Activated CD4-positive, alpha-beta T cell treated with anti-CD3 and anti-CD28 coated beads for 36 hours (primary cell): ENCODE measurements at regions of chr22 and their contacts with region 1.

Region 1: GRCh38 chr22:22207845-22208564 is 36.6 kb upstream of the VPREB1 start:
- DNase-seq: peak; percentile 93
- ATAC-seq: peak; percentile 60
- H3K4me3 Mint-ChIP-seq: no peak overlapping the region
- H3K27ac Mint-ChIP-seq: peak overlapping the region; percentile 66
- H3K4me1 Mint-ChIP-seq: peaks cover 38% of the 10 kb centered on the region
- H3K27me3 Mint-ChIP-seq: no peaks in the 10 kb centered on the region

Region 2: GRCh38 chr22:22195265-22196017 is 12.6 kb before region 1 on chr22:
- CTCF ChIA-PET with region 1: interaction called, 10 read pairs
- POLR2A ChIA-PET with region 1: no interaction called
- intact Hi-C with region 1: no loop called
- DNase-seq: peak; percentile 92
- ATAC-seq: peak; percentile 94
- H3K4me3 Mint-ChIP-seq: no peak overlapping the region
- H3K27ac Mint-ChIP-seq: no peak overlapping the region
- H3K4me1 Mint-ChIP-seq: no peaks in the 10 kb centered on the region
- H3K27me3 Mint-ChIP-seq: peaks cover 13% of the 10 kb centered on the region

Region 3: DNA sequence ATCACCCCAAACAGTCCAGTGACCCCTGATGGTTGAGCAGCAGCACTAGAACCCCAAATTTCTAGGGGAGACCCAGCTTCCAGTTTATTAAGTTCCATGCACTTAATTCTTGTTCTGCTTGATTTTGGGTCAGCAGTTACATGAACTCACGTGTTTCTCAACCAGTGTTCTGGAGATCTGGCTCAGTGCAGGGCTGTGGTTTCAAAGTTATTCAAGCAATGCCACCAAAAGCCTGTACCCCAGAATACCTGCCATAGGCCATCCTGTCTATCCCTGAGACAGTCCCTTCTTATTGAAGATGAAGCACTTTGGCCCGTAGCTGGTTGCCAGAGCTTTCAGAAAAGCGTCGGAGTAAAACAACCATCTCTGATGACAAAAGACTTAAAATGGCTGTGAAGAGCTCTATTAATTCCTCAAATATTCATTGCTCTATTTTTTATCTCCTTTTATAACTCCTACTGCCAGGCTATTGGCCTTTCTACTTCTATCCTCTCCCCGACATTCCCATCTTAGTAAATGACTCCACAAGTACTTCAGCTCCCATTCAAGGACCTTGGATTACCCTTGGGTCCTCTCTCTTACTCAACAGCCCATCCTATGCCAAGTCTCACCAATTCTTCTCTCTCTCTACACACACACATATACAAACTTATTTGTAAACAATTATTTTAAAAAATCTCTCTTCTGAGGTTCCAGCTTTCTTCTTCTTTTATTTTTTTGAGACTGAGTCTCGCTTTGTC is 18.6 kb after region 1 on chr22:
- CTCF ChIA-PET with region 1: interaction called, 313 read pairs
- POLR2A ChIA-PET with region 1: no interaction called
- intact Hi-C with region 1: no loop called
- DNase-seq: no peak
- ATAC-seq: no peak
- H3K4me3 Mint-ChIP-seq: no peak overlapping the region
- H3K27ac Mint-ChIP-seq: no peak overlapping the region
- H3K4me1 Mint-ChIP-seq: no peaks in the 10 kb centered on the region
- H3K27me3 Mint-ChIP-seq: peaks cover 2% of the 10 kb centered on the region

Region 4: DNA sequence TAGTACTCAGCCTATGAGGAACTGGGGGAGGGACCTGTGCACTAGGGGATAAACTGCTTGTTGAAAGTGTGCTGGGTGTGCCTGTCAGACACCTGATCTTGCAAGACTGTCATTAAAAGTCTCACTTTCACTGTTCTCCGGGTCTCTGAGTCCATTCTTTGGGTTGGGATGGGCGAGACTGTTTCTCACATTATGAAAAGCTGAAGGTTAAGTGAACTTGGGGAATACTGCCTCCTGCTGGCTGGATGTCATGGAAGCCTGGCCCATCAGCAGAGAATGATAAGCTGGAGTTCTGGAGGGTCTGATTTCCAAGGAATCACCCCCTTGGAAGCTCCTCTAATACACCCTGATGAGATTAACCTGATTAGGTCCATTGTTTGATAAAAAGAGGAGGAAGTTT is 27.6 kb after region 1 on chr22:
- CTCF ChIA-PET with region 1: interaction called, 313 read pairs
- POLR2A ChIA-PET with region 1: no interaction called
- intact Hi-C with region 1: loop called (anchors 1 kb)
- DNase-seq: peak; percentile 81
- ATAC-seq: peak; percentile 66
- H3K4me3 Mint-ChIP-seq: no peak overlapping the region
- H3K27ac Mint-ChIP-seq: peak overlapping the region; percentile 0
- H3K4me1 Mint-ChIP-seq: peaks cover 3% of the 10 kb centered on the region
- H3K27me3 Mint-ChIP-seq: peaks cover 3% of the 10 kb centered on the region

Region 5: DNA sequence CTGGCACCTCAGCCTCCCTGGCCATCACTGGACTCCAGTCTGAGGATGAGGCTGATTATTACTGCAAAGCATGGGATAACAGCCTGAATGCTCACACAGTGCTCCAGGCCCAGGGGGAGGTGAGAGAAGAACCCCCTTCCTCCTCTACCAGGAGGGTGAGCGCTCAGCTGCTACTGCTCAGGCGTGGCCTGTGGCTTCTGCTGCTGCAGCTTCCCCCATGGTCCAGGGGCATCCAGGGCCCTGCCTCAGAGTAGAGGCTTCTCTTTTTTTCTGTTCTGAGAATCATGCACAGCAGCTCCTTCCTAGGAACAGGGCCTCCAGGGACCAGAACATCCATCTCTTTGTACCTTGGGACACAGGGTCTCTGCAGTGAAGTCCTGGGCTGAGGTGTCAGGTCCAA is 119.7 kb after region 1 on chr22:
- CTCF ChIA-PET with region 1: no interaction called
- POLR2A ChIA-PET with region 1: no interaction called
- intact Hi-C with region 1: loop called in 1 of 2 experiments (anchors 10 kb)
- DNase-seq: no peak
- ATAC-seq: no peak
- H3K4me3 Mint-ChIP-seq: no peak overlapping the region
- H3K27ac Mint-ChIP-seq: no peak overlapping the region
- H3K4me1 Mint-ChIP-seq: peaks cover 1% of the 10 kb centered on the region
- H3K27me3 Mint-ChIP-seq: peaks cover 2% of the 10 kb centered on the region

Region 6: DNA sequence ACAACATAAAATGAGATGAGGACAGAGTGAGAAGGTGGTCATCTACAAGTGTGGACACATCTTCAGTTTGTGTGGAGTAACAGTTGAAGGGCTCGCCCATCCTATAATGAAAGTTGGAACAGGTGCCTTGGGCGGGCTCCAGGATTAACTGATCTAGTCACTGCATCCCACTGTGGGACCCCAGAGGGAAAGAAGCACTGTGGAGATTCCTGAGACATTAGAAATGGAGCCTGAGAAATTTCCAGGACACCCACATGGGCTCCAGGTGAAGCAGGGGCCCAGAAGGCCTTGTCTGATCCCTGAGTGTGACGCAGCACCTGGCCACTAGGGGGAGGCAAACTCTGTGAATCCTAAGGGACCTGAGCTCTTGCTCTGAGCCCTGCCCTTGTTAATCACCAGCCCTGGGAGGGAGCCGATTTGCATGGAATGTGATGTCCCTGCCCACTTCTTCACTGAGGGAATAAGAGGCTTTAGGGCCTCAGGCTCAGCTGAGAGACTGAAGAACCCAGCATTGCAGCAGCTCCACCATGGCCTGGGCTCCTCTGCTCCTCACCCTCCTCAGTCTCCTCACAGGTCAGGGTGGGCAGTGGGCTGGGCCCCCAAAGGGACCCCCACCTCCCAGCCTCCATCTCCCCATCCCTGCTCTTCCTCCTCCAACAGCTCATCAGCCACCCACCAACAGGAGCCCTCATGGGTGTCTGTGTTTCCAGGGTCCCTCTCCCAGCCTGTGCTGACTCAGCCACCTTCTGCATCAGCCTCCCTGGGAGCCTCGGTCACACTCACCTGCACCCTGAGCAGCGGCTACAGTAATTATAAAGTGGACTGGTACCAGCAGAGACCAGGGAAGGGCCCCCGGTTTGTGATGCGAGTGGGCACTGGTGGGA is 134.9 kb after region 1 on chr22:
- CTCF ChIA-PET with region 1: interaction called, 4 read pairs
- POLR2A ChIA-PET with region 1: no interaction called
- intact Hi-C with region 1: loop called in 1 of 2 experiments (anchors 5 kb)
- DNase-seq: peak; percentile 82
- ATAC-seq: peak; percentile 83
- H3K4me3 Mint-ChIP-seq: no peak overlapping the region
- H3K27ac Mint-ChIP-seq: no peak overlapping the region
- H3K4me1 Mint-ChIP-seq: no peaks in the 10 kb centered on the region
- H3K27me3 Mint-ChIP-seq: peaks cover 7% of the 10 kb centered on the region

Region 7: DNA sequence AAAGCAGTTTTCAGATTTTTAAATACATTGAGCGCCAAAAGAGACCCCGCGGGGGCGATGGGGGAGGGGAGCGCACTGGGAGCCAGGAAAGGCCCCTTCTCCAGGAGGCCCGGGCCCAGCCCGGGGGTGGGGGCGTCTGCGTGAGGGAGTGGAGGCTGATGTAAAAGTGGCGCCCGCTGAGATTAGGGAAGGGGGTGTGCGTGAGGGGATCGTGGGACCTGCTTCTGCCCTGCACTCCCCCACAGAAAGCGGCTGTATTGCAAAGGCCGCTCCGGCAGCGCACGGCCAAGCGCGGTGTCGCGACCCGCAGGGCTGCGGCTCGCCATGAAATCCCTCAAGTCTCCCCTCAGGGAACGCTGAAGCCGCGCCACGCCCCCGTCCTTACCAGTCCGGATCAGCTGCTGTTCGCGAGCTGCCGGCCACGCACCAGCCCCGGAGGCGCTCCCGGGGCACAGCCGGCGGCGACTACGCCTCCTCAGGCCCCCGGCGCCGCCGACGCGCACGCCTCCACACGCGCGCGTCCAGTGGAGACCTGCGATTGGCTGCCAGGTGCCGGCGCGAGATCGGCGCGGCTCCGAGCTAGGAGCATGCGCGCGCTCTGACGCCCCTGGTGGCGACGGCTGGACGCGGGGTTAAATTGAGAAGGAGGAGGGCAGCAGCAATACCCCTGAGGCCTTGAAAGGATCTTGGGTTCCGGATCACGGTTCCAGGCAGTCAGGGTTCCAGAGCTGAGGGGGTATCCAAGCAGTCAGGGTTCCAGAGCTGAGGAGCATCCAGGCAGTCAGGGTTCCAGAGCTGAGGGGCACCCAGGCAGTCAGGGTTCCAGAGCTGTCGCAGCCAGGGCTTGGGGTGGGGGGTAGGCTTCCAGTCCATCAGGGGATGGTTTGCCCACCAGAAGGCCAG is 300.5 kb after region 1 on chr22 and contains the start of gene ZNF280B:
- CTCF ChIA-PET with region 1: interaction called, 3 read pairs
- POLR2A ChIA-PET with region 1: no interaction called
- intact Hi-C with region 1: loop called in 1 of 2 experiments (anchors 5 kb)
- DNase-seq: peak; percentile 92
- ATAC-seq: peak; percentile 100
- H3K4me3 Mint-ChIP-seq: peak within 1 kb of the TSS; percentile 79
- H3K27ac Mint-ChIP-seq: peak within 1 kb of the TSS; percentile 53
- H3K4me1 Mint-ChIP-seq: peaks cover 8% of the 10 kb centered on the region
- H3K27me3 Mint-ChIP-seq: peaks cover 4% of the 10 kb centered on the region
- total RNA-seq, gene ZNF280B: 2.5 to 3.7 TPM